Common myeloid progenitor, CD34-positive (primary cell): ENCODE measurements at regions of chr10 and their contacts with region 1.

Region 1: DNA sequence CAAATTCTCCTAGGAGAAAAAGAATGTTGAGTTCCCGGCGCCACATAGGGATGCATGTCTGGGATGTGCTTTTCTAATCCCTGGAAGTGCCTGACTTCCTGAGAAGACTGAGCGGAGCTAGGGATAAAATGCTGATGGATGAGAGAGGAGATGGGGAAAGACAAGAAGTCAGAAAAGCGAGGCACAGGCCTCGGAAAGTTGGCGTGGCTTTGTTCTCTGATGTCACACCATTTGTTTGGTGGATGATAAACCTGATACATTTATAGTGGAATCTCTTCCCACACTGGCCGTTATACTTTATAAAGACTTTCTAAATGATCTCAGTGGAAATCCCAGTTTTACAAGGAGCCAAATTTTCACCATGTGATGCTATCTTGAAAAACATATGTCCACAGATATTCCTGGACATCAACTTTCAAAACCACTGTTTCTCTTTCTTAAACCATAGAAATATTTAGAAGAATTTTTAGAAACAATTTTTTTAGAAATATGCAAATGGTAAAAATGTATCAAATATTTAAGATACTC is 188.8 kb upstream of the SVIL start:
- DNase-seq: no peak
- H3K4me3 ChIP-seq: no peak overlapping the region
- H3K27ac ChIP-seq: no peak overlapping the region
- H3K4me1 ChIP-seq: peaks cover 0 to 15% (median 7%) of the 10 kb centered on the region in 4 experiments
- H3K27me3 ChIP-seq: no peaks in the 10 kb centered on the region

Region 2: DNA sequence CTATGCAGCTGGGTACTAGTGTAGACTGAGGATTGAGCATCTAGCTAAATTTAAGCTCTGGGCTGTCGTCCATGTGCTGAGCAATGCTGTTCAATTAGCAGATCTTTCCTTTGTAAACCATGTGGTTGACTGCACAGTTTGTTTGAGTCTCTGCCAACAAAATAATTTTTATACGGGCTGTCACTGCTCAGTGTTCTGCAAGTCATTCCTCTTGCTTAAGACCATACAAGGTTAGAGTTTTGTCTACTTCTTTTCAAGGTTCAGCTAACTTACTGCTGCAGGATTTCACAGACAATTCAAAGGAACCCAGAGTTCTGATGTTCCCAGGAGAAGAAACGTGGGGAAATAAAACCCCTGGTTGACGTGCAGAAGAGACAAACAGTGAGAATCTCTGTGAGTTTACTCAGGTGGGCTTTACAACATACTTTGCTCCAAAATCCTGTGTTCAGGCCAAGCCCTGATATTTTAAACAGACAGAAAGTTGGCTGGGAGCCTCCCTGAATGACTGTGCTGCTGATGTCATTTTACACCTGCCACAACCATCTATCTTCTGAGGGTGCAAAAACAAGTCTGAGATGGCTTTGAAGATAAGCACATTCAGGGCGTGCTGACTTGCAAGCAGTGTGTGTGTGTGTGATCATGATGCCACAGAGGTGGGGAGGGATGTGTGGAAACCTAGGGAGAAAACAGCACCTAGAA is 11.7 kb before region 1 on chr10:
- CTCF ChIA-PET with region 1: interaction called, 15 read pairs
- POLR2A ChIA-PET with region 1: no interaction called
- DNase-seq: peak; percentile 90 to 99 (median 97)
- H3K4me3 ChIP-seq: peak overlapping the region in 4 of 7 experiments; percentile 7 to 58 (median 32)
- H3K27ac ChIP-seq: peak overlapping the region; percentile 74 to 90
- H3K4me1 ChIP-seq: peaks cover 7 to 42% (median 31%) of the 10 kb centered on the region in 4 experiments
- H3K27me3 ChIP-seq: no peaks in the 10 kb centered on the region

Region 3: DNA sequence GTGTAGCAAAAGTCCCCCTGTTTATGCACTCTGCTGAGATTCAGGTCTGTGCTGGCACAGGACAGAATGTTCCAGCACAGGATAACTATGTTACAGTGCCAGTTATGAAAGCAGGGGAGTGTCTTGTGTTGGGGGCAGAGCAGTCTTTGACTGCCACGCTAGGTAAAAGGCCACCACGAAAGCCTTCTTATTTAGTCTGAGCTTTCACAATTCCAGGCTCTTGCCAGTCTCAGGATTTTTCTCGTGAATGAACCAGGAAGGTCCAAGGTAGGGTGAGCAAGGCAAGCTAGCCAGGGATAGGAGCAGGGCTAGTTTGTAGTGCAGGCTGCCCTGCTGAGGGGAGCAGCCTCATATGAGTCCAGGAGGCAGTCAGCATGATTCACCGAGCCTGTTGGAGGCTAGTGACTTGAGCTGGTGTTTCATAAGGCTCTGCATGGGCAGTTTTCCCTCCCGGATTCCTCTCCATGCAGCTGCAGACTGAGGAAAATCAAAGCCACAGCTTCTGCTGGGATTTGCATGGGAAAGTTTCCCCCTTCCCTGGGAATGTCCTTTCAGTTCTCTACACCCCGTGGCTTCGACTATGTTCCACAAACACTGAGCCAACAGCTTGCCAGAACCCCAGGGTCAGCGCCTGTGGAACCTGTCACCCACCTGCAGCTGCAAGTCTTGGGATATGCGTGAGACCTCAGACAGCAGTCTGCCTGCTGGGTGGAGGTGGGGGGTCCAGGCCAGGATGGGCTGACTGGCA is 123.5 kb after region 1 on chr10:
- CTCF ChIA-PET with region 1: no interaction called
- POLR2A ChIA-PET with region 1: no interaction called
- DNase-seq: no peak
- H3K4me3 ChIP-seq: no peak overlapping the region
- H3K27ac ChIP-seq: no peak overlapping the region
- H3K4me1 ChIP-seq: peaks cover 3 to 46% (median 22%) of the 10 kb centered on the region in 4 experiments
- H3K27me3 ChIP-seq: no peaks in the 10 kb centered on the region

Region 4: DNA sequence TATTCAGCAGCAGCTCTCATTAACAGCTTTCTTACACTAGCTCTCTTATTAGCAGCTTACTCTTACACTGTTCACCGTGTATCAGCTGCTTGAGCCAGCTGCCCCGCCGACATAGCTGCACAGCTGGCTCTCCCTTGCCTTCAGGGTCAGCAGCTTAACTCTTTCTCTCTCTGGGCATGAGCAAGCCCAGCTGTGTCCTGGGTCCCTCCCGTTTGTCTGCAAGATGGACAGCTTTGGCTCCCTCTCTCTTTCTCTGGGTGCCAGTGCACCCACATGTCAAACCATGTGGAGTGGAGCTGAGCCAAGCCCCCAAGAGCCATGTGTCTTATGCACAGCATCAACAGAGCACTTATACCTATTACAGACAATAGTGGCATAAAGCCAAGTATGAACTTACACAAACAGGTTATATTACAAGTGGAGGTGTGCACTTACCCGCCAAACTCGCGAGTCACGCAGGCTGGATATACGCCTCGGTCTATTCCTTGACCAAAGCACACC is 561.1 kb after region 1 on chr10:
- CTCF ChIA-PET with region 1: no interaction called
- POLR2A ChIA-PET with region 1: no interaction called
- DNase-seq: peak; percentile 39 to 58 (median 54)
- H3K4me3 ChIP-seq: no peak overlapping the region
- H3K27ac ChIP-seq: no peak overlapping the region
- H3K4me1 ChIP-seq: no peaks in the 10 kb centered on the region
- H3K27me3 ChIP-seq: no peaks in the 10 kb centered on the region